Activated T-helper 2 cell treated with anti-CD3 and anti-CD28 coated beads, Interferon-gamma antibody, Interleukin-2, Interleukin-4, amounts not matched to agents 10 μg/mL and 5 μg/mL and 100 μg/mL, durations not matched to agents 14 hours and 24 hours and 36 hours (primary cell): ENCODE measurements at regions of chr5 and their contacts with region 1.

Region 1: GRCh38 chr5:115841382-115842088 is at the starts of genes AP3S1 and ATG12:
- DNase-seq: peak; percentile 87
- H3K4me3 Mint-ChIP-seq: peak within 1 kb of the TSS; percentile 97
- H3K27ac Mint-ChIP-seq: peak within 1 kb of the TSS; percentile 99
- H3K4me1 Mint-ChIP-seq: peaks cover 42% of the 10 kb centered on the region
- H3K27me3 Mint-ChIP-seq: peaks cover 2% of the 10 kb centered on the region
- total RNA-seq, gene AP3S1: 69.0 and 74.8 TPM in 2 replicates
- total RNA-seq, gene ATG12: 33.8 and 34.5 TPM in 2 replicates

Region 2: DNA sequence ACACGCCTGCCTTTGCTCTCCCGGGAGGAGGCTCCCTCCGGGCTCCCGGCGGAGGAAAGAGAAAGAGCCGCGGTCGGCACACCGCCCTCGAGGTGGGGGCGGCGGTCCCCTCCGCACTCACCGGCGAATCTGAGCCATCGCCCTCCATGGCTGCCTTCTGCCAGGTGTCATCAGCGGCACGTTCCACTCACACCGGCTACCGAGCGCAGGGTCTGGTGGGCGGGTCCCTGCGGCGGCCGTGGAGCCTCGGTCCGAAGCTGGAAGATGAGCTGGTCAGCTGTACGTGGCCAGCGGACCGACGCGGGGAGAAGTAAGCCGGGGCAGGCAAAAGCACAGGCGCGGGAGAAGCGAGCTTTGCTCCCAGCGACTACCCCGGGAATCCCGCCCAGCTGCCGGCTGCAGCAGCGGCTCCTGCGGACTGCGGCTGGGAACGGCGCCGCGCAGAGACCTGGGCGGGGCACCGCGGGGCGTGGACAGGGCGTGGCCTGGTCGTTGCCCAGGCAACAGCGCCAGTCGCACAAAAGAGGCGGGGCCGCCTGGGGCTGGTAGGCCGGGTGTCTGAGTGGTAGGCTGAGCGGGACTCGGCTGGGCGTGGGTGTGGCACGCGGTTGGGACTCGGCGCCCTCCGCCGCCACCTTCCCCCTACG is 671.9 kb before region 1 on chr5 and contains the start of gene TRIM36:
- intact Hi-C with region 1: loop called (anchors 2 kb)
- DNase-seq: peak; percentile 92
- H3K4me3 Mint-ChIP-seq: peak within 1 kb of the TSS; percentile 76
- H3K27ac Mint-ChIP-seq: no peak within 1 kb of the TSS
- H3K4me1 Mint-ChIP-seq: peaks cover 10% of the 10 kb centered on the region
- H3K27me3 Mint-ChIP-seq: peaks cover 60% of the 10 kb centered on the region
- total RNA-seq, gene TRIM36: not detected in 2 replicates

Region 3: GRCh38 chr5:115309751-115310370 is 531.7 kb before region 1 on chr5:
- intact Hi-C with region 1: loop called (anchors 2 kb)
- DNase-seq: no peak
- H3K4me3 Mint-ChIP-seq: no peak overlapping the region
- H3K27ac Mint-ChIP-seq: no peak overlapping the region
- H3K4me1 Mint-ChIP-seq: no peaks in the 10 kb centered on the region
- H3K27me3 Mint-ChIP-seq: peaks cover 50% of the 10 kb centered on the region

Region 4: DNA sequence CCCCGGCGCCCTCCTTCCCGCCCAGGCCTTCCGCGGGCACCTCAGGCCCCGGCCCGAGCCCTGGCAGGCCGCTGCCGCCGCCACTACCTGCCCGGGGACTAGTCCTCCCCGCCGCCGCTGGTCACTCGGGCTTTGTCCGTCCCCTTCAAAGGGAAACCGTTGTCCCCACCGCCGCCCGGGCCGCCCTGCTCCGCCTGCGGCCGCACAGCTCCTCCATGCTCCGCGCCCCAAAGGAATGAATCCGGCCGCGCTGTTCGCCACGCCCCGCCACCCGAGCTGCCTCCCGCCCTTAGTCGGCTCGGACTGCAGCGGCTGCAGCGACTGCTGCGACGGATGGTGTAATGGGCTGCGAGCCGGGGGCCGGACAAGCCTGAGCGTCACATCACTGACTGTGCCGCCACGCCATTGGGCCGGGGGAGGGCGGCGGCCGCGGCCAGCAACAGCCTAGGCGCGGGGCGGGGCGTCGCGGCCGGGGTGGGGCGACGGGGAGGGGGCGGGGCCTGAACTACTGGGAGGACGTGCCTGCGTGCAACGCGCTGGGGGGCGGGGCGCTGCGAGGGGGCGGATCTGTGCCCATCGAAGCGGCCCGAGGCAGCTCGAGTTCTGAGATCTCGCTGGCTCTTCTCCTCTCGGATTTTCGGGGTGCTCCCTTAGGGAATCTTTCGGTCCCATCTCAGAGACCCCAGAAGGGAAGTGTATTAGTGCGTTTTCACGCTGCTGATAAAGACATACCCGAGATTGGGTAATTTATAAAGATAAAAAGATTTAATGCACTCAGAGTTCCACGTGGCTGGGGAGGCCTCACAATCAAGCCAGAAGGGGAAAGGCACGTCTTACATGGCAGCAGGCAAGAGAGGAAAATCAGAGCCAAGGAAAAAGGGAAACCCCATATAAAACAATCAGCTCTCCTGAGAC is 296.8 kb before region 1 on chr5 and contains the start of gene FEM1C:
- intact Hi-C with region 1: loop called (anchors 1 kb)
- DNase-seq: peak; percentile 92
- H3K4me3 Mint-ChIP-seq: peak within 1 kb of the TSS; percentile 97
- H3K27ac Mint-ChIP-seq: peak within 1 kb of the TSS; percentile 99
- H3K4me1 Mint-ChIP-seq: peaks cover 39% of the 10 kb centered on the region
- H3K27me3 Mint-ChIP-seq: no peaks in the 10 kb centered on the region
- total RNA-seq, gene FEM1C: 14.3 and 15.0 TPM in 2 replicates

Region 5: GRCh38 chr5:115634343-115635132 is 207.0 kb before region 1 on chr5:
- intact Hi-C with region 1: loop called (anchors 1 kb)
- DNase-seq: peak; percentile 75
- H3K4me3 Mint-ChIP-seq: peak overlapping the region; percentile 33
- H3K27ac Mint-ChIP-seq: no peak overlapping the region
- H3K4me1 Mint-ChIP-seq: peaks cover 41% of the 10 kb centered on the region
- H3K27me3 Mint-ChIP-seq: peaks cover 57% of the 10 kb centered on the region

Region 6: DNA sequence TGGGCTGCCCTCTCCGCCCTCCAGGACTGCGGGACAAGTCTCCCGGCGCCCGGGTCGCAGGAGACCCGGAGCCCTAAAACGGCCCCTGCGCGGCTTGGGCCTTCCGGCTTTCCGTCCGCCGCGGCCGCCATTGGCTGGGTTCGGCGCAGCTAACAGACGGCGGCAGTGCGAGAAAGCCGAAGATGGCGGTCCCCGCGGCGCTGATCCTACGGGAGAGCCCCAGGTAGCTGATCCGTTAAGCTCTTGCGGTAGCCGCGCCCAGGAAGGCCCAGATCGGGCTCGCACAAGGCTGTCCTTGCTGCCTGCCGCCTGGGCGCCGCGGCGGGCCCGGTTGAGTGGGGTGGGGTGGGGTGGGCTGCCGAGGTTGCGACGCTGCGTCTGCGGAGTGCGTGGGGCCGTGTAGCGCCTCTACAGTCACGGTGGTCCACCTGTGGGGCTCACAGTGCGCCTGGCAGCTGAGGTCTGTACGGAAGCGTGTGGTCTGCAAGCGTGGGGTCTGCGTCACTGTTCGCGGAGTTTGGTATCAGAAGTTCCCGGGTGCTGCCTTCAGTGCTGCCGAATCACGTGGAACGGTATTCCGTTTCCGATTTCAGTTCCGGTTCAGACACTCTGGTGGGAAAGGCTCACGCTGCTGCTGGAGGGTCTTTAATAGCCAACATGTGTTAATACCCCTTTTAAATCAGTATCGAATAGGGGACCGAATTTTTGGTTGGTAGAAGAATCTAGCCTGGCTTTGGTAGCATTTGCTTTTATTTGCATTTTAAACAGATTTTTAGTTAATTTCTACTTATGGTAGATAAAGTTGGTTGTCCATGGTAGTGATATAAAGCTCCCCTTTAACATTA is 243.6 kb after region 1 on chr5 and contains the start of gene COMMD10:
- intact Hi-C with region 1: loop called (anchors 1 kb)
- DNase-seq: peak; percentile 71
- H3K4me3 Mint-ChIP-seq: peak within 1 kb of the TSS; percentile 84
- H3K27ac Mint-ChIP-seq: peak within 1 kb of the TSS; percentile 80
- H3K4me1 Mint-ChIP-seq: peaks cover 32% of the 10 kb centered on the region
- H3K27me3 Mint-ChIP-seq: no peaks in the 10 kb centered on the region
- total RNA-seq, gene COMMD10: 23.6 and 26.1 TPM in 2 replicates